Sciatic nerve (tissue), 2 donors: ENCODE measurements at regions of chr20 and their contacts with region 1.

Region 1: GRCh38 chr20:561437-562231 is 18.0 kb upstream of the CSNK2A1 start:
- DNase-seq: peak; percentile 66
- ATAC-seq: peak; percentile 71

Region 2: GRCh38 chr20:189611-190010 is 372.0 kb before region 1 on chr20 and contains the start of gene DEFB128:
- intact Hi-C with region 1: no loop called
- DNase-seq: no peak
- ATAC-seq: no peak
- total RNA-seq, gene DEFB128: not detected

Region 3: GRCh38 chr20:462199-462991 is 99.2 kb before region 1 on chr20 and contains the start of gene TBC1D20:
- intact Hi-C with region 1: no loop called
- DNase-seq: peak; percentile 90
- ATAC-seq: peak; percentile 99
- total RNA-seq, gene TBC1D20: 32.5 TPM

Region 4: DNA sequence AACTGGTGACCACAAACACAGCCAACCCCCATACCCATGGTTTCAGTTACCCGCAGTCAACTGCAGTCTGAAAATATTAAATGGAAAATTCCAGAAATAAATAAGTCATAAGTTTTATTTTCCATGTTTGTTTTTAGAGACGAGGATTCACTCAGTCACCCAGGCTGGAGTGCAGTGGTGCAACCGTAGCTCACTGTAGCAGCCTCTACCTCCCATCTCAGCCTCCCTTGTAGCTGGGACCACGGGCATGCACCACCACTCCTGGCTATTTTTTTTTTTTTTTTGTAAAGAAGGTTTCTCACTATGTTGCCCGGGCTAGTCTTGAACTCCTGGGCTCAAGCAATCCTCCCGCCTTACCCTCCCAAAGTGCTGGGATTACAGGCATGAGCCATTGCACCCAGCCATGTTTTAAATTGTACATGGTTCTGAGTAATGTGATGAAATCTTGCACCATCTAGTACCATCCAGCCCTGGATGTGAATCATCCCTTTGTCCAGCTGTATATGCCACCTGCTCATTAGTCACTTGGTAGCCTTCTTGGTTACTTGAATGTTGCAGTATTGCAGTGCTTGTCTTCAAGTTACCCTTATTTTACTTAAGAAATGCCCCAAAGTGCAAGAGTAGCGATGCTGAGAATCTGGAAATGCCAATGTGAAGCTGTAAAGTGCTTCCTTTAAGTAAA is 32.6 kb before region 1 on chr20:
- intact Hi-C with region 1: no loop called
- DNase-seq: no peak
- ATAC-seq: no peak

Region 5: GRCh38 chr20:645318-646106 is 83.9 kb after region 1 on chr20:
- intact Hi-C with region 1: loop called (anchors 10 kb)
- DNase-seq: peak; percentile 79
- ATAC-seq: peak; percentile 77